Left cardiac atrium (tissue), 4 donors: ENCODE measurements at regions of chr5 and their contacts with region 1.

Region 1: GRCh38 chr5:134365604-134366003 is 1.4 kb downstream of the CDKL3 start:
- DNase-seq: no peak
- ATAC-seq: no peak

Region 2: GRCh38 chr5:134176511-134177368 is 188.9 kb before region 1 on chr5 and contains the start of gene SKP1:
- intact Hi-C with region 1: loop called in 1 of 2 experiments (anchors 10 kb)
- DNase-seq: peak; percentile 85
- ATAC-seq: peak; percentile 90 to 94
- total RNA-seq, gene SKP1: 391 to 436 TPM

Region 3: DNA sequence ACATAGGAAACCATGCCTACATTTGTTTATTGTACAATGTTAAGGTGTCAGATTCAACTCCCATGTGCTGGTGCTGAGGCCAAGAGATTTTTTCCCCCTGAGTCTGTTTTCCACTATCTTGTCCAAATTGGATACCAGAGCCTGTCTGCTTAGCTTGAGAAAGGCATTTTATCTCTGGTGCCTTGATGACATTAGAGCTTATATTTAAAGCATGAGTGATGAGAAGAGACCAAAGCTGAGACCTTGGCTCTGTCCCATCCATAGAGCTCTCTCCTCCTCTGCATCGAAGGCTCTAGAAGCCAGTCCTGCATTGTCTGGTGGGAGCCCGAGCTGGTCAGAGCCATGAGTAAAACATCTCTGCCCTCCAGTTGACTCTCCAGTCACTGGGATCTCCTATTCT is 129.3 kb before region 1 on chr5:
- intact Hi-C with region 1: no loop called
- DNase-seq: no peak
- ATAC-seq: peak; percentile 62 to 82

Region 4: DNA sequence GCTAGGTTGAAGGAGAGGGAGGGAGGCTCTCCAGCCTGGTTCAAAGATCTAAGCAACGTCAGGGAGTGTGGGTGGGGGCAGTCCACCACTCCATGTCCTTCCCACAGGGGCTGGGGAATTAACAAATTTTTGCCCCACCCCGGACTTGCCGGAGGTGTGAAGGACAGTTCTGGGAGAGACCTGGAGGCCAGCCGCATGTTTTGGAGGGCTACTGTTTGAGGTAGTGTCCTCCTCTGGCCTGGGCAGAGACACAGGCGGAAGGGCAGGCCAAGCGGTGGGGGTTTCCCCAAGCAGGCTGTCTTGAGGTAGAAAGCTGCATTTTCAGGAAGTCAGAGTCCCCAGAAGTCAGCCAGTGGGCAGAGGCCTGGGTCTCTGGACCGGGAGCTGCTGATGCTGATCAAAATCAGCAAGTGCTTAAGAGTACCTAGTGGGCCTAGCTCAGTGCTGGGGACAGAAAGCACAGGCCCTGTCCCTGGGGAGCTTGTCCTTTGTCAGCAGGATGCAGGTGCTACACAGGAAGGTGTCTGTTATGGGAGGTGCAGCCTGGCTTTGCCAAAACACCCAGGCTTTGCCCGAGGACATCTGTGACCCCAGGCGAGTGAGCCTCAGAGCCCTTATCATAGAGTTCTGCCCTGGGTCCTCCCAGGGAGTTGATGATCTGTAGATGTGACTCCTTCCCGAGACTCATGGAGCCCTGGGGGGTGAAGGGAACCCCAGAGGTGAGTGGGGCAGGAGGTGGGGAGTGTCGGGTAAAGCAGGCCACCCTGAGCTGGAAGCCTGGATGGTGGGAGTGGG is 178.4 kb after region 1 on chr5:
- intact Hi-C with region 1: no loop called
- DNase-seq: no peak
- ATAC-seq: no peak

Region 5: GRCh38 chr5:134659456-134659855 is 293.9 kb after region 1 on chr5:
- intact Hi-C with region 1: no loop called
- DNase-seq: no peak
- ATAC-seq: no peak